ENCODE measurements at regions of chr6 and their contacts with region 1.

Region 1: DNA sequence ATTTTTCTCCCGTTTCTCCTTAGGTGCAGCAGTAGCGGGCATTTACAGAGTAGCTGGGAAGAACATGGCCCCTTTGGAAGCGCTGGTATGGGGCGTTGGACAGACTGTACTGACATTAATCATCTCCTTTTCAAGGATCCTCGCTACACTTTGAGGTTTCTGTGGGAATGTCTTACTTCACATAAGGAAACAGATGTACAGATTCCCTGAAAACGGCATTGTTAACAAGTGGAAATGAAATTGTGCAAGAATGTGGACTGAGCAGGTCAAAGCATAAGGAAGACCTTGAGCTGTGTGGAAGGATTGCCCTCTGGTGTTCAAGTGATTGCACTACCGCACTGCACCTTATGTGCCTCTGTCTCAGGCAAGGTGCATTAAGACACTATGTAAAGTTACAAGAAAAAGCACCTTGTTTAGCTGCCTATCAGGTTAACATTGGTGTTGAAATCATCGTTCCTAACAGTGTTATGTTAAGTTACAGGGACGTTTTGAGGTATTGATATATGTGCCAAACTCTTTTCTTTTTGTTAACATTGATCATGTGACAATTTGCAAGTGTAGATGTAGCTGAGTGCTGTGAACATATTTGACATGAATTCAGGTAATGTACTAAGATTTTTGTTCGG is 38.0 kb downstream of the TMEM170B start:
- DNase-seq: peak; percentile 74
- ATAC-seq: peak; percentile 100
- H3K4me3 ChIP-seq: no peak overlapping the region
- H3K27ac ChIP-seq: no peak overlapping the region
- H3K4me1 ChIP-seq: no peaks in the 10 kb centered on the region; the same call in 1 of the 2 replicates
- H3K27me3 ChIP-seq: no peaks in the 10 kb centered on the region
- CTCF ChIP-seq: peak; percentile 92 to 99 (median 97); a peak in 5 of 6 replicates
- EP300 ChIP-seq: no peak
- POLR2A ChIP-seq: no peak
- RAD21 ChIP-seq: peak; percentile 97

Region 2: GRCh38 chr6:10954590-10955010 is 620.9 kb before region 1 on chr6:
- CTCF ChIA-PET with region 1: interaction called, 22 read pairs
- POLR2A ChIA-PET with region 1: no interaction called
- RAD21 ChIA-PET with region 1: interaction called, 11 read pairs
- SMC1A ChIA-PET with region 1: interaction called, 9 read pairs
- in situ Hi-C with region 1: loop called (anchors 5 kb)
- intact Hi-C with region 1: loop called (anchors 1 kb)
- DNase-seq: peak; percentile 31
- ATAC-seq: peak; percentile 99
- H3K4me3 ChIP-seq: no peak overlapping the region
- H3K27ac ChIP-seq: no peak overlapping the region
- H3K4me1 ChIP-seq: no peaks in the 10 kb centered on the region
- H3K27me3 ChIP-seq: no peaks in the 10 kb centered on the region
- CTCF ChIP-seq: peak; percentile 89 to 97 (median 92)
- EP300 ChIP-seq: no peak
- POLR2A ChIP-seq: no peak
- RAD21 ChIP-seq: peak; percentile 70

Region 3: DNA sequence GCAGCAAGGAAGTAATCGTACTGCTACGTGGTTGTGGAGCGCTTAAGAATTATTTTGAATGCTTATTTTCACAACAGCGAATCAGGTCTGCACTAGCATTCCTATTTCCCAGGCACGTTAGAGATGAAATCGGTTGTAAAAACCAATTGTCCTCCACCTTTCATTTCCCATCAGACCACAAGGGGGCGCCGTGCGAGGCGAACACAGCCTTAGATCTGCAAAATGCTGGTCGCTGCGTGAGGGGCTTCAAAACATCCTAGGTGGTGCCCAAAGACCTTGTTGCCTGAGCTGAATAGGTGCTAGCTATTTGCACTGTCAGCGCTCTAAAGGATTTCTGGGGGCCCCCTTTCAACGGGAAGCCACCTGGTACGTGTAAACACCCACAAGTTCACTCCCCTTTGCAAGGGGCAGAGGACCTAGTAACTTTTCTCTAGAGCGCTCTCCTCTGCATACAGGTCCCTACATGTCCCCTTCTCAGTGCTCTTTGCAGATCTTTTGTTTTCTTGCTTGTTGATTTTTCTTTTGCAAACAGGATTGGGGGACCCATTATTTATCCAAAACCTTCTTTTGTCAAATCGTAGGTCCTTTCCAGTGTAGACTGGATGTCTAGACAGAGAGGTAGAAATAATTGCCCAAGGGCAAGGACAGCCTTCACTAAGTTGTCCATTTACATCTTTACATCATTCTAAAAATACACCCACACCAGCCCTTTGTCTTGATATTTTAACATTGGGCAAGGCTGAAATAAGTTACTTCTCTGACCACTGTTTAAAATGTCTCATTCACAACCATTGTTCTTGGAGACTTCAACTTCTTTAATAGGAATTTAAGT is 402.8 kb before region 1 on chr6:
- CTCF ChIA-PET with region 1: interaction called, 12 read pairs
- POLR2A ChIA-PET with region 1: no interaction called
- RAD21 ChIA-PET with region 1: interaction called, 5 read pairs
- SMC1A ChIA-PET with region 1: interaction called, 7 read pairs
- in situ Hi-C with region 1: no loop called
- intact Hi-C with region 1: no loop called
- DNase-seq: no peak
- ATAC-seq: peak; percentile 89
- H3K4me3 ChIP-seq: no peak overlapping the region
- H3K27ac ChIP-seq: no peak overlapping the region
- H3K4me1 ChIP-seq: no peaks in the 10 kb centered on the region
- H3K27me3 ChIP-seq: no peaks in the 10 kb centered on the region
- CTCF ChIP-seq: peak; percentile 81 to 88 (median 81)
- EP300 ChIP-seq: no peak
- POLR2A ChIP-seq: no peak
- RAD21 ChIP-seq: peak; percentile 83

Region 4: GRCh38 chr6:11514672-11515071 is 60.8 kb before region 1 on chr6:
- CTCF ChIA-PET with region 1: interaction called, 26 read pairs
- POLR2A ChIA-PET with region 1: interaction called, 3 read pairs
- RAD21 ChIA-PET with region 1: interaction called, 18 read pairs
- SMC1A ChIA-PET with region 1: interaction called, 12 read pairs
- in situ Hi-C with region 1: no loop called
- intact Hi-C with region 1: no loop called
- DNase-seq: peak; percentile 87
- ATAC-seq: peak; percentile 87
- H3K4me3 ChIP-seq: no peak overlapping the region
- H3K27ac ChIP-seq: peak overlapping the region; percentile 97
- H3K4me1 ChIP-seq: peaks cover 40% of the 10 kb centered on the region
- H3K27me3 ChIP-seq: no peaks in the 10 kb centered on the region
- CTCF ChIP-seq: no peak
- EP300 ChIP-seq: peak in 1 of 2 experiments; percentile 89; a peak in 1 of 4 replicates
- POLR2A ChIP-seq: no peak
- RAD21 ChIP-seq: no peak

Region 5: GRCh38 chr6:11542863-11543262 is 32.7 kb before region 1 on chr6:
- CTCF ChIA-PET with region 1: interaction called, 23 read pairs
- POLR2A ChIA-PET with region 1: no interaction called
- RAD21 ChIA-PET with region 1: interaction called, 8 read pairs
- SMC1A ChIA-PET with region 1: interaction called, 15 read pairs
- in situ Hi-C with region 1: no loop called
- intact Hi-C with region 1: no loop called
- DNase-seq: no peak
- ATAC-seq: no peak
- H3K4me3 ChIP-seq: no peak overlapping the region
- H3K27ac ChIP-seq: no peak overlapping the region
- H3K4me1 ChIP-seq: no peaks in the 10 kb centered on the region
- H3K27me3 ChIP-seq: no peaks in the 10 kb centered on the region
- CTCF ChIP-seq: no peak
- EP300 ChIP-seq: no peak
- POLR2A ChIP-seq: no peak
- RAD21 ChIP-seq: no peak

Region 6: GRCh38 chr6:11609315-11610071 is 34.0 kb after region 1 on chr6:
- CTCF ChIA-PET with region 1: no interaction called
- POLR2A ChIA-PET with region 1: no interaction called
- RAD21 ChIA-PET with region 1: no interaction called
- SMC1A ChIA-PET with region 1: no interaction called
- in situ Hi-C with region 1: no loop called
- intact Hi-C with region 1: no loop called
- DNase-seq: no peak
- ATAC-seq: no peak
- H3K4me3 ChIP-seq: no peak overlapping the region
- H3K27ac ChIP-seq: no peak overlapping the region
- H3K4me1 ChIP-seq: no peaks in the 10 kb centered on the region
- H3K27me3 ChIP-seq: peaks cover 0 to 3% of the 10 kb centered on the region in 2 experiments; a peak in 2 of 4 replicates
- CTCF ChIP-seq: no peak
- EP300 ChIP-seq: no peak
- POLR2A ChIP-seq: no peak
- RAD21 ChIP-seq: no peak

Region 7: GRCh38 chr6:11665604-11666326 is 90.2 kb after region 1 on chr6:
- CTCF ChIA-PET with region 1: no interaction called
- POLR2A ChIA-PET with region 1: no interaction called
- RAD21 ChIA-PET with region 1: no interaction called
- SMC1A ChIA-PET with region 1: no interaction called
- in situ Hi-C with region 1: no loop called
- intact Hi-C with region 1: no loop called
- DNase-seq: no peak
- ATAC-seq: peak; percentile 74
- H3K4me3 ChIP-seq: no peak overlapping the region
- H3K27ac ChIP-seq: no peak overlapping the region
- H3K4me1 ChIP-seq: no peaks in the 10 kb centered on the region
- H3K27me3 ChIP-seq: no peaks in the 10 kb centered on the region
- CTCF ChIP-seq: no peak
- EP300 ChIP-seq: no peak
- POLR2A ChIP-seq: no peak
- RAD21 ChIP-seq: no peak

Region 8: GRCh38 chr6:11754625-11755271 is 179.2 kb after region 1 on chr6:
- CTCF ChIA-PET with region 1: no interaction called
- POLR2A ChIA-PET with region 1: no interaction called
- RAD21 ChIA-PET with region 1: no interaction called
- SMC1A ChIA-PET with region 1: no interaction called
- in situ Hi-C with region 1: no loop called
- intact Hi-C with region 1: no loop called
- DNase-seq: no peak
- ATAC-seq: no peak
- H3K4me3 ChIP-seq: no peak overlapping the region
- H3K27ac ChIP-seq: no peak overlapping the region
- H3K4me1 ChIP-seq: no peaks in the 10 kb centered on the region
- H3K27me3 ChIP-seq: no peaks in the 10 kb centered on the region
- CTCF ChIP-seq: no peak
- EP300 ChIP-seq: no peak
- POLR2A ChIP-seq: no peak
- RAD21 ChIP-seq: no peak

Measured in GM12878 (cell line).